AG04449 (cell line): ENCODE measurements at regions of chr10 and their contacts with region 1.

Region 1: DNA sequence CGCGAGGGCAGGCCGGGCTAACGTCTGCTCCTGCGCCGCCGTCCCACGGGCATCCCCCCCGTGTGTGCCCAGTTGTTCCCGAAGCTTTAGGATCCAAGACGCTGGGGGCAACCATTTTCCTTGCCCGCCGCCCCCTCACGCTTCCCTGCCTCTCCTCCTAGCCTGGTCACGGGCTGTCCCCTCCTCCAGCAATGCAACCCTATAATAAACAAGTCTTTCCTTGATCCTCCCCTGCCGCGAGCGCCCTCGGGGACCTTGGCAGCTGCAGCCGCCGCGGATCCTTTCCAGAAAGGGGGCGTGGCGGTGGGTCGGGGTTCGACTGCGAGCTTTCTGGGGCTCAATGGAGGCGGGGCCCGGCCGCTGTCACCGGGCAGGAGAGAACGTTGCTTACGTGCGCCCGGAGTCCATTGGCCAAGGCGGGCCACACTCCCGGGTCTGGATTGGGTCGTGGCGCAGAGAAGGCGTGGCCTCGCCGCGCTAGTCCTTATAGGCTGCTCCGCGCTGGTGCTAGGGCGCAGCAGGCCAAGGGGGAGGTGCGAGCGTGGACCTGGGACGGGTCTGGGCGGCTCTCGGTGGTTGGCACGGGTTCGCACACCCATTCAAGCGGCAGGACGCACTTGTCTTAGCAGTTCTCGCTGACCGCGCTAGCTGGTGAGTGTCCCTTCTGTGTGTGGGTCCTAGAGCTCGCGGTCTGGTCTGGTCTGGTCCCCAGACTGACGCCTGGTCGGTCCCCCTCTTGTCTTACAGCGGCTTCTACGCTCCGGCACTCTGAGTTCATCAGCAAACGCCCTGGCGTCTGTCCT is at the start of gene DDIT4:
- DNase-seq: peak; percentile 96
- H3K4me3 ChIP-seq: peak within 1 kb of the TSS; percentile 99
- CTCF ChIP-seq: no peak

Region 2: GRCh38 chr10:72133517-72133916 is 140.1 kb before region 1 on chr10:
- CTCF ChIA-PET with region 1: no interaction called
- POLR2A ChIA-PET with region 1: no interaction called
- DNase-seq: peak; percentile 31
- H3K4me3 ChIP-seq: no peak overlapping the region
- CTCF ChIP-seq: no peak

Region 3: GRCh38 chr10:72215652-72216549 is 57.7 kb before region 1 on chr10 and contains the starts of genes ANAPC16 and ASCC1:
- CTCF ChIA-PET with region 1: no interaction called
- POLR2A ChIA-PET with region 1: interaction called, 12 read pairs
- DNase-seq: peak; percentile 28
- H3K4me3 ChIP-seq: peak within 1 kb of the TSS; percentile 90
- CTCF ChIP-seq: no peak

Region 4: DNA sequence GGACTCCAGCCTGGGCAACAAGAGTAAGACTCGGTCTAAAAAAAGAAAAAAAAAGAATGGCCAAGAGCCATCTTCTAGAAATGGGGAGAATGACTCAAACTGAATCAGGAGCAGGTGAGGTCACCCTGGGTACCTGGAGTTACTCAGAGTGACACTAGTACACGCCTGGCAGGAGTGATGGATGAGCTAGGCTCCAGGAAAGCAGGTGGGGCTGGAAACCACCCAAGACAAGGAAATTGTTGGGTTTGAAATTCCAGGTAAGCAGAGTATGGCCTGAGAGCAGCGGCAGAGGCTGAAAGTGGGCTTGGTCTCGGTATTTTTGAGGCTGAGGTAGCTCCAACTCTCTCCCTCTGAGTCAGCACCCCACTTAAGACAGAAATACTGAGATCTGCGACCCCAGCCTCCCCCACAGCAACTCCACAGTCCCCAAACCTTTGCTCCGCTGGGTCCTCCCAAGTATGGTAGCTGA is 18.6 kb after region 1 on chr10:
- CTCF ChIA-PET with region 1: interaction called, 25 read pairs
- POLR2A ChIA-PET with region 1: interaction called, 44 read pairs
- DNase-seq: no peak
- H3K4me3 ChIP-seq: no peak overlapping the region
- CTCF ChIP-seq: no peak

Region 5: DNA sequence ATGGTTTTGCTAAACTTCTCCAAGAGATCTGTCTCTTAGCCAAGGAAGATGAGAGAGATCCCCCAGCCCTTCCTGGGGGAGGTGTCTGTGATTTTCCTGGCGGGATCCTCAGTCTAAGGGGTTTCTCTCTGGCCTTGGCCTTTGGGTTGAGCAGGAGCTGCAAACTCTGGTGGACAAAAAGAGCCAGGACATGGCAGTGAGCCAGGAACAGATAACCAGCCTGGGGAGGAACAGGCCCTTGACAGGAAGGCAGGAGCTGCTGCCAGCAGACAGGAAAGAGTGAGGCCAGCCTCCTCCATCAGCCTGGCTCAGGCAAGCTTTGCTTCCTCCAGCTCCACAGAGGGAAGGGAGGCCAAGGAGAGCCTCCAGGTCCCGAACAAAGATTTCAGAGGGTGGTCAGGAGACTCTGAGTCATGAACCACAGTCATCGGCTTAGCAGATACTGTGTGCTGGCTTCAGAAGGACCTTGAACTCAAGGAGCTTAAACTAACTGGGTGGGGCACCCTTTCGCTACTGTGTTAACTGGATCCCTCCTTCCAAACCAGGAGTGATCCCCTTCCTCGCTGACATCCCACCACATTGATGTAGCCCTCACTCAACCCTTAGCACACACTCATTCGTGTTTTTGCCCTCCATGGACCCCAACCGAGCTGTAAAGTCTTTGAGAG is 34.8 kb after region 1 on chr10:
- CTCF ChIA-PET with region 1: interaction called, 3 read pairs
- POLR2A ChIA-PET with region 1: interaction called, 18 read pairs
- DNase-seq: no peak
- H3K4me3 ChIP-seq: no peak overlapping the region
- CTCF ChIP-seq: no peak

Region 6: GRCh38 chr10:72331601-72332422 is 58.2 kb after region 1 on chr10:
- CTCF ChIA-PET with region 1: interaction called, 34 read pairs
- POLR2A ChIA-PET with region 1: interaction called, 11 read pairs
- DNase-seq: no peak
- H3K4me3 ChIP-seq: no peak overlapping the region
- CTCF ChIP-seq: peak; percentile 7

Region 7: GRCh38 chr10:72354478-72355213 is 81.0 kb after region 1 on chr10 and contains the start of gene DNAJB12:
- CTCF ChIA-PET with region 1: interaction called, 3 read pairs
- POLR2A ChIA-PET with region 1: interaction called, 11 read pairs
- DNase-seq: peak; percentile 56
- H3K4me3 ChIP-seq: peak within 1 kb of the TSS; percentile 100
- CTCF ChIP-seq: no peak